ENCODE measurements at regions of chr2 and their contacts with region 1.

Region 1: DNA sequence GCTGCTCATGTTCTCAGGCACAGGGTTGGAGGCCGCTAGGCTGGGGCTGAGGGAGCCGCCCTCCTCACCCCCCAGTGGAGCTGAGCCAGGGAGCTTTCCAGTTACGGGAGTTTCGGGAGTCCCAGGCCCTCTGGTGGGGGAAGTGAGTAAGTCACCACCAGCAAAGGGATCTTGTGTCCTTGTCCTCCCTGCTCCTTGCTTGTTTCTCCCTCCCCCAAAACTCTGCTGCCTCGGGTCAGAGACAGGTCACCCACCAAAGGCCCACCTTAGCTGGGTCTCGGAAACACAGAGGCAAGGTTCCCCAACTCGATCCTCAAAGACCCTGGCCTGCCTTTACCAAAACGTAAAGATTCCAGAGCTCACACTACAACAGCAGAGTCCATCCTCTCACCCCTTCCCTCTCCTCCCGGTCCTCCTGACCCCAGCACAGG is 60.5 kb upstream of the POMC start:
- DNase-seq: peak; percentile 50
- ATAC-seq: peak; percentile 52
- H3K4me3 Mint-ChIP-seq: no peak overlapping the region
- H3K27ac Mint-ChIP-seq: no peak overlapping the region
- H3K4me1 Mint-ChIP-seq: peaks cover 21% of the 10 kb centered on the region
- H3K27me3 Mint-ChIP-seq: no peaks in the 10 kb centered on the region
- CTCF ChIP-seq: peak; percentile 59

Region 2: DNA sequence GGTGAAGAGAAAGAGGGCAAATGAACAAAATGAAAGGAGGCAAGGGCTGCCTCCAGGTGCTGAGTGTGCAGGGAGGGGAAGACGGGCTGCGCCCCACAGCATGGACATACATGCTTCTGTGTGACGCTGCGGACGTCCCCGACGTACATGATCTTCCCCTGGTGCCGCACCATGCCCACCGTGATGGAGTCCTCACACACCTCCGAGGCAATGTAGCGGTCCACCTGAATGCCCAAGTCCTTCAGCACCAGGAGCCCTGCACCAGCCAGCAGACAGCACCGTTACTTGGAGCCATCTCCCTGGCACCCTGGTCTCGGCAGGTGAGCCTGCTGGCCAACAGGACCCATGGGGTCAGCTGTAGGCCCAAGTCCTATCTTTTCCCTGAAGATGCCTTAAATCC is 12.6 kb after region 1 on chr2:
- CTCF ChIA-PET with region 1: interaction called, 8 read pairs
- POLR2A ChIA-PET with region 1: interaction called, 10 read pairs
- intact Hi-C with region 1: no loop called
- DNase-seq: no peak
- ATAC-seq: no peak
- H3K4me3 Mint-ChIP-seq: no peak overlapping the region
- H3K27ac Mint-ChIP-seq: no peak overlapping the region
- H3K4me1 Mint-ChIP-seq: no peaks in the 10 kb centered on the region
- H3K27me3 Mint-ChIP-seq: no peaks in the 10 kb centered on the region
- CTCF ChIP-seq: no peak

Region 3: DNA sequence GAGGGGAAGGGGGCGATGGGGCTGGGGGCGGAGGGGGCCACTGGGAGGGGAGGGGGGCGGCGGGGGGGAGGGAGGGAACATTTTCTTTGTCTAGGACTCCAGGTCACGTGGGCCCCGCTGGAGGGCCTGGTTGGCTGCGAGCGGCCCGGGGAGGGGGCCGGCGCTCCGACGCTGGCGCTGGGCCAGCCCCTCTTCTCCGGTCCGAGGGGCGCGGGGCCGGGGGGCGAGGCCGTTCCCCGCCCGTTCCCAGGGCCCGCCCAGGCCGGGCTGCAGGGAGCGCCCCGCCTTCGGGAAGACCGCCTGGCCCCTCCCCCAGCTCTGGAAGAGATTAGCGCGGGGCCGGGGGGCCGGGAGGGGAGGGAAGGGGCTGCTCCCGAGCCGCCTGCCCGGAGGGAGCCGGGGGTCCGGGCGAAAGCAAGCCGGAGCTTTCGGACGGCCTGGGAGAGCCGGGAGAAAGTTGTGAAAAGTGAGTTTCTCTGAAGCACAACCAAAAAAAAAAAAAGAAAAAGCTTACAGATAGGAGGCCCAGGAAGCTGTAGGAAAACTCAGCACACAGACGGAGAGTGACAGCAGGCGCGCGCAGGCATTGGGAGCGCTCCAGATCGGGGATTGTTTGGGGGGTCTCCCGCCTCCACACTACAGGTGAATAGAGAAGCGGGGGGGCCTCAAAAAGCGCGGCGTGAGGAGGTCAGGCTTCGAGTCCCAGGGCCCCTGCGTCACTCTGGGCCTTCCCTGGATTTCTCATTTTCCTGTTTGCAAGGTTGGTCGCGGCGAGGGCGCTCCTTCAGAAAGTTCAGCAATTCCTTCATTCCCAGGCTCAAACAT is 23.6 kb after region 1 on chr2:
- CTCF ChIA-PET with region 1: interaction called, 11 read pairs
- POLR2A ChIA-PET with region 1: interaction called, 6 read pairs
- intact Hi-C with region 1: no loop called
- DNase-seq: peak; percentile 70
- ATAC-seq: peak; percentile 51
- H3K4me3 Mint-ChIP-seq: peak overlapping the region; percentile 87
- H3K27ac Mint-ChIP-seq: peak overlapping the region; percentile 66
- H3K4me1 Mint-ChIP-seq: peaks cover 34% of the 10 kb centered on the region
- H3K27me3 Mint-ChIP-seq: no peaks in the 10 kb centered on the region
- CTCF ChIP-seq: no peak

Region 4: GRCh38 chr2:25270061-25270460 is 41.2 kb after region 1 on chr2:
- CTCF ChIA-PET with region 1: no interaction called
- POLR2A ChIA-PET with region 1: no interaction called
- intact Hi-C with region 1: no loop called
- DNase-seq: no peak
- ATAC-seq: no peak
- H3K4me3 Mint-ChIP-seq: no peak overlapping the region
- H3K27ac Mint-ChIP-seq: no peak overlapping the region
- H3K4me1 Mint-ChIP-seq: peaks cover 43% of the 10 kb centered on the region
- H3K27me3 Mint-ChIP-seq: no peaks in the 10 kb centered on the region
- CTCF ChIP-seq: no peak

Region 5: DNA sequence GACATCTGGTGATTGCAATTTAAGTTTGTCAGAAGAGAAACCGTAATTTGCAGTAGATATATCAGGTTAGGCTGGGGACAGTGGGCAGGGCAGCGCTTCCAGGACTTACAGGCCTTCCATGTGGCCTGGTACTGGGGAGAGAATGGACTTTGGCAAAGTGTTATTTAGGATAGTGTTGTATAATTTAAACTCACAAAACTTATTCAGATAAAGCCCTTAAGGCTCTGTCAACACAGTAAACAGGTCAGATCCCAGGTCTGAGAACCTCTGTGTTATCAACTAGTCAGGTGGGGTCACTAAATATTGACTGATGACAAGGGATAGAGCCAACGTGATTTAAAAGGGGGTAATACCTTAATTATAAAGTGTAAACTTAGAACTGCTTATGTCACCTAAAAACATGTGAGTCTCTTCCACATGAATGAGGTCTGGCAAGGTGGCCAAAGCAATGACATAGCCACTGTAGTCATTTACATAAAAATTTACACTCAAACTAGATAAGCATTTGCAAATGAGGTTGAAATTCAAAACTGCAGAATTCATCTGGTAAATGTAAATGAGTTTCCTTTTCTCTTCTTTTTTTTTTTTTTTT is 193.1 kb after region 1 on chr2:
- CTCF ChIA-PET with region 1: no interaction called
- POLR2A ChIA-PET with region 1: no interaction called
- intact Hi-C with region 1: no loop called
- DNase-seq: no peak
- ATAC-seq: no peak
- H3K4me3 Mint-ChIP-seq: no peak overlapping the region
- H3K27ac Mint-ChIP-seq: no peak overlapping the region
- H3K4me1 Mint-ChIP-seq: peaks cover 14% of the 10 kb centered on the region
- H3K27me3 Mint-ChIP-seq: no peaks in the 10 kb centered on the region
- CTCF ChIP-seq: no peak